ENCODE measurements at regions of chr12 and their contacts with region 1.

Region 1: DNA sequence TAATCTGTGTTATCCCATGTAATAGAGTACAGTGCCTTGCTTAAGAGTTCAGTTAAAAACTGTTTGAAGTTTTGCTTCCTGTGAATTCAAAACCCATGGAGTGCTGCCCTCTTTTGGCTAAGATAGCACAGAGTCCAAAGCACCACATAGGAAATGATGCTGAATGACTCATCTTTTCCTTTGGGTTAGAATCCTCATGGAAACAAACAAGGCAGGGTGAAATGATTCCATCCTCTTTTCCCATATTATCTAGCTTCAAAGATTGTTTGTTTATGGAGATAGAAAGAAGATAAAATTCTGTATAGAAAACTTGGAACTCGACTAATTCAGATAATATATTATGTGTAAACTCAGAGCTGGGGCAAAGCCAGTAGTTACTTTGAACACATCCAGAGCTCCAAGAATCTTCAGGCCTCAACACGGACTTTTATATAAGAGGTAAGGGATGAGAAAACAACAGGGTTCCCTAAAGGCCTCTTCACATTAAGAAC is 87.4 kb downstream of the OTOGL start:
- DNase-seq: peak; percentile 97
- H3K4me3 ChIP-seq: no peak overlapping the region
- H3K27ac ChIP-seq: peak overlapping the region; percentile 92
- H3K4me1 ChIP-seq: peaks cover 19% of the 10 kb centered on the region
- H3K27me3 ChIP-seq: no peaks in the 10 kb centered on the region
- CTCF ChIP-seq: peak; percentile 63 to 78
- POLR2A ChIP-seq: no peak

Region 2: GRCh38 chr12:79420146-79420618 is 766.6 kb before region 1 on chr12:
- CTCF ChIA-PET with region 1: interaction called, 16 read pairs
- POLR2A ChIA-PET with region 1: no interaction called
- dilution Hi-C with region 1: no loop called
- intact Hi-C with region 1: loop called (anchors 1 kb)
- DNase-seq: peak; percentile 93
- H3K4me3 ChIP-seq: no peak overlapping the region
- H3K27ac ChIP-seq: peak overlapping the region; percentile 97
- H3K4me1 ChIP-seq: peaks cover 54% of the 10 kb centered on the region
- H3K27me3 ChIP-seq: no peaks in the 10 kb centered on the region
- CTCF ChIP-seq: peak; percentile 47 to 63
- POLR2A ChIP-seq: peak; percentile 9

Region 3: DNA sequence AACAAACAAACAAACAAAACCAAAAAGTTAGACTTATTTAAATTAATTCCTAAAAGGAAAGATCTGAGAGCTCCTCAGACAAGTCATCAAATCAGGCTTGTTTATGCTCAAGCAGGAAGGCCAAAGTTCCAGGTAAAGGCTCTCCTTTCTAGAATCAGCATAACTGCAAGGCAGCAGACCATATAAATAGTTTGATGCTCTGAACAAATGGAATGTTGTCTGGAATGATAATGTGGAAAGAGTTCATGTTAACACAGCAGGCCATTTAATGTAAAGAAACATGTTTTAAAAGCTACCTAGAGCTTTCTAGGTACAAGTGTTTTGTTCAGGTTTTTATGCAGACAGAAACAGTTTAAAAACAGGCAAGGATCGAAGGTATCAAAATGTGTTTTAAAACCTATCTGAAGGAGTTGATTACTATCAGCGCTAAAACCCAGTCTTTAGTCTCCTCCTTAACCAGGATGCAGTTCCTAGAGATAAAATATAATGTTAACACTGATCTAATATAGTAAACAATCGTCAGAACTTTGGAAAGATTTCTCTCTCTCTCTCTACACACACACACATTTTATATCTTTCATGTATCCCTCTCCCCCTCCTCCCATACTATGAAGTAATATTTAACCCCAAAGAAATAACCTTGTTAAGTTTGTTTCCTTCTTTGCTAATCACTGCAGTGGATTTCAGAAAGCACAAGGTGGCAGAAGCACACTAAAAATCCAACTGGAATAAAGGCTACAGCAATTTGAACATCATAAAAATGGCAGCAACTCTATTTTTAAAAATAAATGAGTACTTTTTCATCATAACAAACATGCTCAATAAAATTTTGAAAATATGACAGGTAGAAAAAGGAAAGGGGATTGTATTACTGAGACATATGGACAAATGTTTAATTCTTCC is 631.5 kb before region 1 on chr12:
- CTCF ChIA-PET with region 1: interaction called, 5 read pairs
- POLR2A ChIA-PET with region 1: no interaction called
- dilution Hi-C with region 1: no loop called
- intact Hi-C with region 1: loop called (anchors 1 kb)
- DNase-seq: peak; percentile 79
- H3K4me3 ChIP-seq: no peak overlapping the region
- H3K27ac ChIP-seq: no peak overlapping the region
- H3K4me1 ChIP-seq: peaks cover 56% of the 10 kb centered on the region
- H3K27me3 ChIP-seq: no peaks in the 10 kb centered on the region
- CTCF ChIP-seq: peak; percentile 43 to 48
- POLR2A ChIP-seq: no peak

Region 4: GRCh38 chr12:79690638-79691493 is 495.9 kb before region 1 on chr12 and contains the start of gene PAWR:
- CTCF ChIA-PET with region 1: interaction called, 5 read pairs
- POLR2A ChIA-PET with region 1: no interaction called
- dilution Hi-C with region 1: no loop called
- intact Hi-C with region 1: loop called (anchors 2 kb)
- DNase-seq: peak; percentile 83
- H3K4me3 ChIP-seq: peak within 1 kb of the TSS; percentile 85 to 96 (median 88)
- H3K27ac ChIP-seq: peak within 1 kb of the TSS; percentile 85
- H3K4me1 ChIP-seq: peaks cover 28% of the 10 kb centered on the region
- H3K27me3 ChIP-seq: no peaks in the 10 kb centered on the region
- CTCF ChIP-seq: peak in 1 of 2 donors; percentile 37
- POLR2A ChIP-seq: peak; percentile 21
- total RNA-seq, gene PAWR: 154 and 175 TPM in 2 replicates

Region 5: DNA sequence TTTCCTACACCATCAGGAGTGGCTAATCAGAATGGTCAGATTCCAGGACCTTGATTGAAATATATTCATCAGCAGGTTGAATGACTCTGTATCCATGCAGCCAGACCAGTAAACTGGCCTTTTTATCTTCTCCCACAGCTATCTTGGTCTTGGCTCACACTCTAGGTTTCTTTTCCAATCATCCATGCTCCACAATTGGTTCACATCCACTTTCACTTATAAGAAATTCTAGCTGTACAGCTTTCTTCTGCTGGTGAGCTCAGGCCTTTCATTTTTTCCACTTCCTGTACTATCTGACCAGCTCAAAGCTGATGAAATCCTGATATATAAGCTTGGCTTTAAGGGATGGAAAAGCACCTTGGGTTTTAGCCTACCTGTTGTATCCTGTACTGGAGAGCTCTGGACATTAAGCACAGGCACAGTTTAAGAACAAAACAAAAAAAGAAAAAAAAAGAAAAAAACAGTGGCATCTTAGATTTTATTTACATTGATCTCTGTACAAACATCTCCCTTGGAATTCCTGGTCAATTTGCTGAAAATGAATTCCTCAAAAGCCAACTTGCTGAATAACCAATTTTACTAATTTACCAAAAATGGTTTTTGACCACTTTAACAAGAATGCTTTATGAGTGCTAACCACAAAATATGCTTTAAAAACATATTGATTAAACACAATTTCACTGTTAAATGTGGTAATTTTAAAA is 404.4 kb before region 1 on chr12:
- CTCF ChIA-PET with region 1: interaction called, 6 read pairs
- POLR2A ChIA-PET with region 1: no interaction called
- dilution Hi-C with region 1: no loop called
- intact Hi-C with region 1: loop called (anchors 10 kb)
- DNase-seq: peak; percentile 31
- H3K4me3 ChIP-seq: no peak overlapping the region
- H3K27ac ChIP-seq: no peak overlapping the region
- H3K4me1 ChIP-seq: no peaks in the 10 kb centered on the region
- H3K27me3 ChIP-seq: no peaks in the 10 kb centered on the region
- CTCF ChIP-seq: no peak
- POLR2A ChIP-seq: no peak

Region 6: GRCh38 chr12:79886917-79887519 is 299.8 kb before region 1 on chr12:
- CTCF ChIA-PET with region 1: interaction called, 23 read pairs
- POLR2A ChIA-PET with region 1: no interaction called
- dilution Hi-C with region 1: no loop called
- intact Hi-C with region 1: loop called (anchors 1 kb)
- DNase-seq: peak; percentile 77
- H3K4me3 ChIP-seq: no peak overlapping the region
- H3K27ac ChIP-seq: peak overlapping the region; percentile 3
- H3K4me1 ChIP-seq: peaks cover 30% of the 10 kb centered on the region
- H3K27me3 ChIP-seq: no peaks in the 10 kb centered on the region
- CTCF ChIP-seq: peak; percentile 33 to 39
- POLR2A ChIP-seq: no peak

Region 7: GRCh38 chr12:80056845-80057244 is 129.9 kb before region 1 on chr12:
- CTCF ChIA-PET with region 1: interaction called, 6 read pairs
- POLR2A ChIA-PET with region 1: no interaction called
- dilution Hi-C with region 1: no loop called
- intact Hi-C with region 1: loop called (anchors 1 kb)
- DNase-seq: peak; percentile 98
- H3K4me3 ChIP-seq: no peak overlapping the region
- H3K27ac ChIP-seq: no peak overlapping the region
- H3K4me1 ChIP-seq: peaks cover 15% of the 10 kb centered on the region
- H3K27me3 ChIP-seq: peaks cover 0 to 2% of the 10 kb centered on the region in 2 experiments
- CTCF ChIP-seq: no peak
- POLR2A ChIP-seq: no peak

Region 8: GRCh38 chr12:80154261-80154660 is 32.5 kb before region 1 on chr12:
- CTCF ChIA-PET with region 1: no interaction called
- POLR2A ChIA-PET with region 1: no interaction called
- dilution Hi-C with region 1: no loop called
- intact Hi-C with region 1: no loop called
- DNase-seq: no peak
- H3K4me3 ChIP-seq: no peak overlapping the region
- H3K27ac ChIP-seq: no peak overlapping the region
- H3K4me1 ChIP-seq: no peaks in the 10 kb centered on the region
- H3K27me3 ChIP-seq: peaks cover 0 to 2% of the 10 kb centered on the region in 2 experiments
- CTCF ChIP-seq: no peak
- POLR2A ChIP-seq: no peak

Region 9: DNA sequence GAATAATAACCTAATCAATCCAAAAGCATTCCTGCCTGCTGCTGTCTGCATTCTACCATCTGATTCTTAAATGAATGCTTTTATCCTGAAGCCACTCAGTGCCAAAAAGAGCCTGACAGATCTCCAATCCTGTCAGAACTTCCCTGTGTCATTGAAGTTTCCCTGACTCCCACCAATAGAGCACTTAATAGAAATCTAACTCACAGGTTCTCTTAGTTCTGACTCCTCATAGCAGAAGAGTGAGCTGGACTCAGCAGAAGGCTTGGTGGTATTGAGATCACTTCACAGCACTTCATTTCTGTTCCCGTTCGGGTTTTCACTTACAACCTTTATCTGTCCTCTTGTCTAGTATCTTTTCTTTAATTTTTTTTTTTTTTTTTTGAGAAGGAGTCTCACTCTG is 15.1 kb after region 1 on chr12:
- CTCF ChIA-PET with region 1: no interaction called
- POLR2A ChIA-PET with region 1: no interaction called
- dilution Hi-C with region 1: no loop called
- intact Hi-C with region 1: no loop called
- DNase-seq: no peak
- H3K4me3 ChIP-seq: no peak overlapping the region
- H3K27ac ChIP-seq: no peak overlapping the region
- H3K4me1 ChIP-seq: no peaks in the 10 kb centered on the region
- H3K27me3 ChIP-seq: no peaks in the 10 kb centered on the region
- CTCF ChIP-seq: no peak
- POLR2A ChIP-seq: no peak

Region 10: DNA sequence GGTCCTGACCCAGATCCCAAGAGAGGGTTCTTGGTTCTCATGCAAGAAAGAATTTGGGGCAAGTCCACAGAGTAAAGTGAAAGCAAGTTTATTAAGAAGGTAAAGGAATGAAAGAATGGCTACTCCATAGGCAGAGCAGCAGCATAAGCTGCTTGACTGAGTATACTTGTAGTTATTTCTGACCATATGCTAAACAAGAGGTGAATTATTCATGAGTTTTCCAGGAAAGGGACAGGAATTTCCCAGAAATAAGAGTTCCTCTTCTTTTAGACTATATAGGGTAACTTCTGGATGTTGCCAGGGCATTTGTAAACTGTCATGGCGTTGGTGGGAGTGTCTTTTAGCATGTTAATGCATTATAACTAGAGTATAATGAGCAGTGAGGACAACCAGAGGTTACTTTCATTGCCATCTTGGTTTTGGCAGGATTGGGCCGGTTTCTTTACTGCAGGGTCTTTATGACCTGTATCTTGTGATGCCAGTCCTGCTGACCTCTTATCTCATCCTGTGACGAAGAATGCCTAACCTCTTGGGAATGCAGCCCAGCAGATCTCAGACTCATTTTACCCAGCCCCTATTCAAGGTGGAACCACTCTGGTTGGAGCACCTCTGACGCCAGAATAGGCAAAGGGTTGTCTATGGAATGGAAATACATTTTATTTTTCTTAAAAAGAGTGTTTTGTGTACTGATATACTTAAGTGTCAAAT is 26.3 kb after region 1 on chr12:
- CTCF ChIA-PET with region 1: no interaction called
- POLR2A ChIA-PET with region 1: no interaction called
- dilution Hi-C with region 1: no loop called
- intact Hi-C with region 1: no loop called
- DNase-seq: no peak
- H3K4me3 ChIP-seq: no peak overlapping the region
- H3K27ac ChIP-seq: no peak overlapping the region
- H3K4me1 ChIP-seq: no peaks in the 10 kb centered on the region
- H3K27me3 ChIP-seq: no peaks in the 10 kb centered on the region
- CTCF ChIP-seq: no peak
- POLR2A ChIP-seq: no peak

Measured in endothelial cell of umbilical vein (primary cell).